Mammary epithelial cell (primary cell): ENCODE measurements at regions of chr5 and their contacts with region 1.

Region 1: GRCh38 chr5:55969956-55970355 is 24.8 kb downstream of the IL6ST start:
- DNase-seq: no peak
- H3K4me3 ChIP-seq: no peak overlapping the region
- H3K27ac ChIP-seq: no peak overlapping the region
- H3K4me1 ChIP-seq: peaks cover 3% of the 10 kb centered on the region
- H3K27me3 ChIP-seq: no peaks in the 10 kb centered on the region
- CTCF ChIP-seq: no peak

Region 2: GRCh38 chr5:55650386-55650785 is 319.6 kb before region 1 on chr5:
- CTCF ChIA-PET with region 1: no interaction called
- dilution Hi-C with region 1: no loop called
- in situ Hi-C with region 1: no loop called
- intact Hi-C with region 1: no loop called
- DNase-seq: peak; percentile 42
- H3K4me3 ChIP-seq: no peak overlapping the region
- H3K27ac ChIP-seq: no peak overlapping the region
- H3K4me1 ChIP-seq: no peaks in the 10 kb centered on the region
- H3K27me3 ChIP-seq: no peaks in the 10 kb centered on the region
- CTCF ChIP-seq: no peak

Region 3: GRCh38 chr5:55913466-55914413 is 56.2 kb before region 1 on chr5:
- CTCF ChIA-PET with region 1: no interaction called
- dilution Hi-C with region 1: loop called (anchors 5 kb)
- in situ Hi-C with region 1: no loop called
- intact Hi-C with region 1: no loop called
- DNase-seq: no peak
- H3K4me3 ChIP-seq: no peak overlapping the region
- H3K27ac ChIP-seq: no peak overlapping the region
- H3K4me1 ChIP-seq: no peaks in the 10 kb centered on the region
- H3K27me3 ChIP-seq: no peaks in the 10 kb centered on the region
- CTCF ChIP-seq: no peak

Region 4: GRCh38 chr5:56012281-56012963 is 42.5 kb after region 1 on chr5:
- CTCF ChIA-PET with region 1: interaction called, 11 read pairs
- dilution Hi-C with region 1: no loop called
- in situ Hi-C with region 1: no loop called
- intact Hi-C with region 1: no loop called
- DNase-seq: peak; percentile 60
- H3K4me3 ChIP-seq: no peak overlapping the region
- H3K27ac ChIP-seq: no peak overlapping the region
- H3K4me1 ChIP-seq: no peaks in the 10 kb centered on the region
- H3K27me3 ChIP-seq: no peaks in the 10 kb centered on the region
- CTCF ChIP-seq: no peak

Region 5: GRCh38 chr5:56183506-56183905 is 213.6 kb after region 1 on chr5:
- CTCF ChIA-PET with region 1: no interaction called
- dilution Hi-C with region 1: no loop called
- in situ Hi-C with region 1: loop called in 1 of 2 experiments (anchors 10 kb)
- intact Hi-C with region 1: no loop called
- DNase-seq: peak; percentile 92
- H3K4me3 ChIP-seq: no peak overlapping the region
- H3K27ac ChIP-seq: no peak overlapping the region
- H3K4me1 ChIP-seq: peaks cover 9% of the 10 kb centered on the region
- H3K27me3 ChIP-seq: peaks cover 3% of the 10 kb centered on the region
- CTCF ChIP-seq: no peak

Region 6: GRCh38 chr5:56190497-56190896 is 220.5 kb after region 1 on chr5:
- CTCF ChIA-PET with region 1: no interaction called
- dilution Hi-C with region 1: no loop called
- in situ Hi-C with region 1: loop called (anchors 10 kb)
- intact Hi-C with region 1: no loop called
- DNase-seq: peak; percentile 72
- H3K4me3 ChIP-seq: no peak overlapping the region
- H3K27ac ChIP-seq: no peak overlapping the region
- H3K4me1 ChIP-seq: peaks cover 4% of the 10 kb centered on the region
- H3K27me3 ChIP-seq: peaks cover 6% of the 10 kb centered on the region
- CTCF ChIP-seq: no peak